ENCODE measurements at regions of chr19 and their contacts with region 1.

Region 1: DNA sequence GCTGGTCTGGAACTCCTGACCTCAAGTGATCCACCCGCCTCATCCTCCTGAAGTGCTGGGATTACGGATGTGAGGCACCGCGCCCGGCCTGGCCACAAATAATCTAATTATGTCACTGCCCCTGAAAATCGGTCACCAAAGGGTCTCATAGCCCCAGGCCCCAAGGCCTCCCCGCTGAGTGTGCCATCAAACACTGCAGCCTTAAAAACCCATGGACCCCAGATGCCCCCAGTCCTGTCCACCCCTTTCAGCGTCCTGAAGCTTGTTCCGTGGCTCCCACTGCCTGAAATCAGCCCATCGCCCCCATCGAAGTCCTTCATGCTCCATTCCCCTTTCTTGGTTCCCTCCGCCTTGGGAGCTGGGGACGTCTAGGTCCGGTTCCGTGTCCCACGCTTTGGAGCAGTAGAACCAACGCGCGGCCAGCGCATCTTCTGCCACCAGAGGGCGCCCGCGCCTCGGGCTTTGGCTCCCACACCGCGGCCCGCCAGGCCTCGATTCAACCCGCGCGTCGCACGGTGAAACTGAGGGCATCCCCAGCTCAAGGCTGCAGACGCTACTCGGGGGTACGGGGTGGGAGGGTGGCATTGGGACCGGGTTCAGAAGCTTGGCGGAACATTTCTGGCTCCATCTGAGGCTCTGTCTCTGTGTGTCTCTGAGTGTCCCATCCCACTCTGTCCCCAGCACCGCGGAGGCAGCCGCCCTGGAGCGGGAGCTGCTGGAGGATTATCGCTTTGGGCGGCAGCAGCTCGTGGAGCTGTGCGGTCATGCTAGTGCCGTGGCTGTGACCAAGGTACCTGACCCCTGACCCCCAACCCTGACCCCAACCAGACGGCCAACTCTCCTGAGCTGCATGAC is 3.5 kb downstream of the YJEFN3 start:
- DNase-seq: peak; percentile 97
- H3K4me3 ChIP-seq: peak overlapping the region in 1 of 8 donors; percentile 33
- H3K27ac ChIP-seq: peak overlapping the region in 1 of 8 donors; percentile 13
- H3K4me1 ChIP-seq: peaks cover 6 to 39% (median 17%) of the 10 kb centered on the region in 6 donors
- H3K27me3 ChIP-seq: peaks cover 0 to 8% (median under 1%) of the 10 kb centered on the region in 7 donors
- CTCF ChIP-seq: peak; percentile 89 to 97 (median 92)
- POLR2A ChIP-seq: no peak

Region 2: DNA sequence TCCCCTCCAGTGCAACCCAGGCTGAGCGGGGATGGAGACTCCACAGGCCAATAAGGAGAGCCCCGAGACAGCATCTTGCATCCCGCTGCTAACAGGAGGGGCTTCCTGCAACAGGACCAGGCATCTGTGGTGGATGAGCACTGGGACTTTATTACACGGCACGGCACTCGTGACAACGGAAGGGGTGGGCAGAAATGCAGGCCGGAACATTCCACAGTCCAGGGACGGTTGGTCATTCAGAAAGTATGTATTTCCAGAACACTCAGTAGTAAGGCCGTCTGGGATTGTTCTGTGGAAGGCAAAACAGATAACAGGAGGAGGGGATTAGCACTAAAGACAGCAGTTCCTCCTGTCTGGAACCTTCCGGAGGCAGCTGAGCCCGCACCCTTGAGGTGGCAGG is 255.8 kb before region 1 on chr19:
- intact Hi-C with region 1: no loop called
- DNase-seq: no peak
- H3K4me3 ChIP-seq: no peak overlapping the region
- H3K27ac ChIP-seq: no peak overlapping the region
- H3K4me1 ChIP-seq: peaks cover 0 to 12% (median 8%) of the 10 kb centered on the region in 6 donors
- H3K27me3 ChIP-seq: peaks cover 0 to 23% (median 6%) of the 10 kb centered on the region in 7 donors
- CTCF ChIP-seq: no peak
- POLR2A ChIP-seq: no peak

Region 3: GRCh38 chr19:19643158-19644053 is 111.2 kb after region 1 on chr19 and contains the start of gene GMIP:
- intact Hi-C with region 1: loop called (anchors 5 kb)
- DNase-seq: peak; percentile 98
- H3K4me3 ChIP-seq: peak within 1 kb of the TSS; percentile 71 to 95 (median 79)
- H3K27ac ChIP-seq: peak within 1 kb of the TSS; percentile 89 to 100 (median 95)
- H3K4me1 ChIP-seq: peaks cover 5 to 58% (median 31%) of the 10 kb centered on the region in 6 donors
- H3K27me3 ChIP-seq: no peaks in the 10 kb centered on the region
- CTCF ChIP-seq: peak; percentile 48 to 89 (median 79)
- POLR2A ChIP-seq: peak; percentile 52 to 57 (median 57)
- total RNA-seq, gene GMIP: 59.9 to 141 (median 96.9) TPM

Region 4: DNA sequence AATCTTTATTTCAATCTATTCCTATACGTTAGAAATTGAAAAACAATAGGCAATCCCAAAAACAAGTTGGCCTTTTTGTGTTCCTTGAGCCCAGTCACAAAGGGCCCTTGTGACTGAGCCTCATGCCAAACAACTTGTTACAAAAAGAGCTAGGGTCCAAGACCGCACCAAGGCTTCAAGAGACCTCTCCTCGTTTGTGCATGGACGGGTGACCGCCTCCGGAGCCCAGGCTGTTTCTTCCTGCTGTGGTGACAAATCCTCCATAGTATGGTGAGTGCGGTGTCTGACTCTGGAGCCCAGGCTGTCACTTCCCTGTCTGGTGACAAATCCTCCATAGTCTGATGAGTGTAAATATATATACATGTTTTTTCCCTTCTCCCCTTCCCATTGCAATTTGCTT is 432.2 kb after region 1 on chr19:
- intact Hi-C with region 1: loop called (anchors 5 kb)
- DNase-seq: no peak
- H3K4me3 ChIP-seq: no peak overlapping the region
- H3K27ac ChIP-seq: no peak overlapping the region
- H3K4me1 ChIP-seq: no peaks in the 10 kb centered on the region
- H3K27me3 ChIP-seq: no peaks in the 10 kb centered on the region
- CTCF ChIP-seq: no peak
- POLR2A ChIP-seq: no peak